ENCODE measurements at regions of chr10 and their contacts with region 1.

Region 1: DNA sequence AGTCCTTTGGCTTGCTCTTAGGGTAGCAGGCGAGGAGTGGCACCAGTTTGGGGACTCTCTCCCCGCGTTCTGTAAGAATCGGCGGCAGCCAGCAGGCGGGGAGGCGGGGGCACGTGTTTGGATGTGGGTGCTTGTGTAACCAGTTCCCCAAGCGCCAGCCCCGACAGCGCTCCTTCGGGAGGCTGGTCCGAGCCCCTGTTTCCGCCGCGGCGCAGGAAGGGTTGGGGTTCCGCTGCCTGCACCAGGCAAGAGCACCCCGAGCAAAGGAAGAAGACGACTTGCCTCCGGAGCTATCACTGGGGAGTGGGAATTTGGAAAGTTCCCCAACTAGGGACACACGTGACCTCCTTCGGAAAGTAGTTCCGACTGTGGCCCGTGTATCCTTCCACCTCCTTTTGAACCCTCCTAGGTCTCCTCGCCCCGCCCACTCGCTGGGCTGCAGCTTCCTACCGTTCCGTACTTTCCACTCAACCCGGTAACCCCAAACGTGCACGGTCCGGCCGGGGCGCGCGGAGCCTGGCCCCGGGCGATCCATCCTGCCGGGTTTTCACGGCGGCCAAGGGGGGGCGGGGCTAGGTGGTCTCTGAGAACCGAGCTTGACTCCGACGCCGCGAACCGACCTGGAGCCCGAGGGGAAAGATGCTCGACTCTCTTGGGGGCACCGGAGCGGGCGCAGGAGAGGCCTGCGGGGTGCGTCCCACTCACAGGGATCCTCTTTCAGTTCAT is 1.2 kb downstream of the KLLN start:
- DNase-seq: peak; percentile 95 to 99
- H3K4me3 ChIP-seq: peak overlapping the region; percentile 83 to 97
- H3K27ac ChIP-seq: peak overlapping the region; percentile 83 to 100
- H3K4me1 ChIP-seq: peaks cover 0 to 12% (median 7%) of the 10 kb centered on the region in 4 donors
- H3K27me3 ChIP-seq: no peaks in the 10 kb centered on the region
- CTCF ChIP-seq: peak in 1 of 2 experiments; percentile 20

Region 2: DNA sequence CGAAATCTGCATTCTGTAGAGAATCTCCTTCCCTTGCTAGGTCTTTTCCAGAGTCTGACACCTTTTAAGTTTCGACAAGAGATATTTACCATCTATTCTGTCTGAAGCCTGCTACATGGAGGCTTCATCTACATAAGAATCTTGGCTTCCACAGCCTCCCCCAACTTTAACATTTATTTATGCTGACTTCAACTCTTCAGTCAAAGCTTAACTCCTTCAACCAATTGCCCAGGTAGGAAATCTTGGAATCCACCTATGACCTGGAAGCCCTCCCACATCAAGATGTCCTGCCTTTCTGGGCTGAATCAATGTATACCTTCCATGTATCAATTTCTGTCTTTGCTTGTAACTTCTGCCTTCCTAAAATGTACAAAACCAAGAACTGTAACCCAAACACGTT is 302.7 kb before region 1 on chr10:
- intact Hi-C with region 1: no loop called
- DNase-seq: no peak
- H3K4me3 ChIP-seq: no peak overlapping the region
- H3K27ac ChIP-seq: no peak overlapping the region
- H3K4me1 ChIP-seq: no peaks in the 10 kb centered on the region
- H3K27me3 ChIP-seq: no peaks in the 10 kb centered on the region
- CTCF ChIP-seq: no peak

Region 3: GRCh38 chr10:88012641-88013040 is 150.5 kb after region 1 on chr10:
- intact Hi-C with region 1: loop called (anchors 5 kb)
- DNase-seq: no peak
- H3K4me3 ChIP-seq: no peak overlapping the region
- H3K27ac ChIP-seq: peak overlapping the region; percentile 35 to 62
- H3K4me1 ChIP-seq: peaks cover 0 to 26% (median 3%) of the 10 kb centered on the region in 4 donors
- H3K27me3 ChIP-seq: no peaks in the 10 kb centered on the region
- CTCF ChIP-seq: no peak

Region 4: DNA sequence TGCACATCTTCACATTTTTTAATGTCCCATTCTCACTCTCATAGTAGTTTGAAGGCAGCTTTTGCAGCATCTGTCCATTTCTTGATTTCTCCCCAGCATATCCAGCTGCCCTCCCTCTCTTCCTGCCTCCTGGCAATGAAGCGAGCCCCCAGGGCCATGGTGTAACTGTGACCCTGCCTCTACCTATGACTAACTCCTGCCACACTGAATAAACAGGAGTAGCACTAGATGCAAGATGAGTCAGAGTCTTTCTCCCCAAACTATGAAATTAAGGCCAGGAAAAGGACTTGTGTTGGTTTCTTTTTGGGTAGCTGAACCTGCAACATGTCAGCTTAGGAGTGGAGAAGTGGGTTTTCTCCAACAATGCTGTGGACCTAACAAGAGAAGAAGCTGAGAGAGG is 392.0 kb after region 1 on chr10:
- intact Hi-C with region 1: loop called (anchors 10 kb)
- DNase-seq: peak in 1 of 2 donors; percentile 49
- H3K4me3 ChIP-seq: no peak overlapping the region
- H3K27ac ChIP-seq: peak overlapping the region; percentile 25 to 77
- H3K4me1 ChIP-seq: peaks cover 0 to 30% (median 13%) of the 10 kb centered on the region in 4 donors
- H3K27me3 ChIP-seq: no peaks in the 10 kb centered on the region
- CTCF ChIP-seq: no peak

Region 5: DNA sequence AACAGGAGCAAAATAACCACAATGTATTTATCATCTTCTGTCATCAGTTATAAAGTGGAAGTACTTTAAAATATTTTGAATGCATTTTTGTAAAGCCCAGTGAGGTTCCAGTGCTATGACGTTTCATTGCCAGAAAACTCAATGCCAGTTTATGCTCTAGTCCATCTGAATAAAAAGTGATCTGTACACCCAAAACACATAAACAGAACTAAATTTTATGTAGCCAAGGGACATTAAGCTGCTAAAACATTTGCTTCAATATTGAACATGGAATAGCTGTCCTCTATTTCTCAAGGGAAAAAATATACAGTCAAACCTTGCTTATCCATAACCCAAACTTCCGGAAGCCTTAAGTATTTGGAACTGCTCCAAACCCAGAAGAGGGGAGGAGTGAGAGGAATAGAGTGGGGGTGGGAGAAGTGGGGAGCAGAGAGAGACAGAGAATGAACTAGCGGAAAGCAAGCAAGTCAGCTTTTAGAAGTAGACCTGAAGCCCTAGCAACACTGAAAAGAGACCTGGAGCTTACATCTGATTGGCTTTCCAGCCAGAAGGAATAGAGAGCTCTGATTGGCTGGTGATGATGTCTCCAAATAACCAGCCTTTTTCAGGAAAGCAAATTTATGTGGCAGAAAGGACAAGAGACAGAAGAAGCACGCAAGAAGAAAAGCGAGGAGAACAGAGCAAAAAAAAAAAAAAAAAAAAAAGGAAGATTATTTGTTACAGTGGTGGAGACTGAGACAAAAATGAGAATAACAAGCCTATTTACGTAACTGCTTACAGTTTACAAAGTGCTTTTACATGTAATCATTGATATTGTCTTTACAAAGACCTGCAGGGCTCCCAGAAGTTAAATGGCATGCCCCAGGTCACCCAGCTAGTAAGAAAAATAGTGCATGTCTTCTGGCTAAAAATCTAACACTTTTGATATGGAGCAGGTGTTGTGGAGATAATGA is 525.0 kb after region 1 on chr10:
- intact Hi-C with region 1: loop called (anchors 5 kb)
- DNase-seq: peak in 1 of 2 donors; percentile 21
- H3K4me3 ChIP-seq: peak overlapping the region; percentile 33 to 38
- H3K27ac ChIP-seq: peak overlapping the region; percentile 74 to 76
- H3K4me1 ChIP-seq: peaks cover 0 to 24% (median 16%) of the 10 kb centered on the region in 4 donors
- H3K27me3 ChIP-seq: no peaks in the 10 kb centered on the region
- CTCF ChIP-seq: no peak

Measured in tibial artery (tissue), 4 donors.